ENCODE measurements at regions of chr16 and their contacts with region 1.

Region 1: GRCh38 chr16:10971560-10971961 is 27.2 kb downstream of the CLEC16A start:
- DNase-seq: peak; percentile 50
- H3K4me3 Mint-ChIP-seq: no peak overlapping the region
- H3K27ac Mint-ChIP-seq: peak overlapping the region; percentile 82
- H3K4me1 Mint-ChIP-seq: peaks cover 74% of the 10 kb centered on the region
- H3K27me3 Mint-ChIP-seq: no peaks in the 10 kb centered on the region

Region 2: DNA sequence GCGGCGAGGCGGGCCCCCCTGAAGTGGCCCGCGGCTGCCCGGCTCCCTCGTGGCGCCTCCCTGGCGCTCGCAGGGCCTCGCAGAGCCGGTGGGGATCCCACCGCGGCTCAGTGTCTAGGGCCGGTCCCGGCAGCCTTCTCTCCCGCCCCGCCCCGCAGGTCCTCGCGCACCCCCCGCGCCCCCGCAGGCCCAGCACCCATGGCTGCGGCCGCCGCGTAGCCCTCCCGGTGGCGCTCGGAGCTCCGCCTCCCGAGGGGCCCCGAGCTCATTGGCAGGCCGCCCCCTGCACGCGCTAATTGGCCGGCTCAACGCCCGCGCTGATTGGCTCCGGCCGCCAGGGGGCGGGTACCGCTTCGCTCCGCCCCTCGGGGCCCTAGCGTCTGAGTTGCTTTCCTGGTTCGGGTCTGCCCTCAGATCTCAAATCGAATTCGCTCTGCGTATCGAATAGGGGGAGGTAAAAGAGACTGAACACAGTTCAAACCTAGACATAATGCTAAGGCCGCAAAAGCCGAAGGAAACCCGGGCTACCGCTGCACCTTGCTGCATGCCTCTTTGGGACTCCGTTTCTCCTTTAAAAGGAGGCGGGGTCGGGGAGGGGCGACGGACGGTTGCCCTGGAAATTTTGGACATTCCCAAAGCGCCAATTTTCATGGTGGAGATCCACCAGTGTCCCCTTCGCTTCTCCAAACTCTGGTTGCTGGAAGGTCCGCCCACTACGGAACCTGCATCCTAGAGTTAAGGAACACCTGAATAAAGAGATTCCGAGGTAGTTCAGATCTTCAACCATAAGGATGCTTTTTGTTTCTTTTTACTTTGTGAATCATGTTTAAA is 29.1 kb before region 1 on chr16 and contains the start of gene DEXI:
- CTCF ChIA-PET with region 1: no interaction called
- POLR2A ChIA-PET with region 1: no interaction called
- DNase-seq: peak; percentile 96
- H3K4me3 Mint-ChIP-seq: peak within 1 kb of the TSS; percentile 86
- H3K27ac Mint-ChIP-seq: peak within 1 kb of the TSS; percentile 76
- H3K4me1 Mint-ChIP-seq: peaks cover 82% of the 10 kb centered on the region
- H3K27me3 Mint-ChIP-seq: no peaks in the 10 kb centered on the region
- total RNA-seq, gene DEXI: 24.2 to 24.7 TPM

Region 3: GRCh38 chr16:10981697-10982216 is 10.2 kb after region 1 on chr16:
- CTCF ChIA-PET with region 1: interaction called, 14 read pairs
- POLR2A ChIA-PET with region 1: interaction called, 20 read pairs
- DNase-seq: peak; percentile 77
- H3K4me3 Mint-ChIP-seq: peak overlapping the region; percentile 60
- H3K27ac Mint-ChIP-seq: peak overlapping the region; percentile 87
- H3K4me1 Mint-ChIP-seq: peaks cover 90% of the 10 kb centered on the region
- H3K27me3 Mint-ChIP-seq: no peaks in the 10 kb centered on the region

Region 4: GRCh38 chr16:10988164-10988803 is 16.7 kb after region 1 on chr16:
- CTCF ChIA-PET with region 1: interaction called, 14 read pairs
- POLR2A ChIA-PET with region 1: interaction called, 20 read pairs
- DNase-seq: peak; percentile 85
- H3K4me3 Mint-ChIP-seq: peak overlapping the region; percentile 43
- H3K27ac Mint-ChIP-seq: peak overlapping the region; percentile 85
- H3K4me1 Mint-ChIP-seq: peaks cover 90% of the 10 kb centered on the region
- H3K27me3 Mint-ChIP-seq: no peaks in the 10 kb centered on the region